ENCODE measurements at regions of chr4 and their contacts with region 1.

Region 1: GRCh38 chr4:87375719-87376291 is 15.2 kb downstream of the HSD17B11 start:
- DNase-seq: no peak
- H3K4me3 Mint-ChIP-seq: no peak overlapping the region
- H3K27ac Mint-ChIP-seq: no peak overlapping the region
- H3K4me1 Mint-ChIP-seq: no peaks in the 10 kb centered on the region
- H3K27me3 Mint-ChIP-seq: no peaks in the 10 kb centered on the region

Region 2: DNA sequence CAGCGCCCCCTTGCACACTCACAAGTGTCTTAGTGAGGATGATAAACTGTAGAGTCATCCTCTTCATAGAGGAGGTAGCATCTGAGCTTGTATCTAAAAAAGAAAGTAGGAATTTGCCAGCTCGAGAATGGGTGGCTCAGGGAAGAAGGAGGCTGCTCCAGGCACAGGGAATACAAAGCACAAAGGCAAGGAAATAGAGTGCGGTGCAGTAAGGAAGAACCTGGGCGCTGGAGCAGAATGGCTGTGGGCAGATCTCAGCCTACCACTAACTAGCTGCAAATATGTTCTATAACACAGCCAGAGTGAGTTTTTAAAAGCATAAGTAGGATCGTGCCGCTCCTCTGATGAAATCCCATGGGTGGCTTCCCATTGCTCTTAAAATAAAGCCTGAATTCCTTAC is 954.3 kb before region 1 on chr4:
- CTCF ChIA-PET with region 1: no interaction called
- DNase-seq: no peak
- H3K4me3 Mint-ChIP-seq: no peak overlapping the region
- H3K27ac Mint-ChIP-seq: no peak overlapping the region
- H3K4me1 Mint-ChIP-seq: no peaks in the 10 kb centered on the region
- H3K27me3 Mint-ChIP-seq: no peaks in the 10 kb centered on the region

Region 3: DNA sequence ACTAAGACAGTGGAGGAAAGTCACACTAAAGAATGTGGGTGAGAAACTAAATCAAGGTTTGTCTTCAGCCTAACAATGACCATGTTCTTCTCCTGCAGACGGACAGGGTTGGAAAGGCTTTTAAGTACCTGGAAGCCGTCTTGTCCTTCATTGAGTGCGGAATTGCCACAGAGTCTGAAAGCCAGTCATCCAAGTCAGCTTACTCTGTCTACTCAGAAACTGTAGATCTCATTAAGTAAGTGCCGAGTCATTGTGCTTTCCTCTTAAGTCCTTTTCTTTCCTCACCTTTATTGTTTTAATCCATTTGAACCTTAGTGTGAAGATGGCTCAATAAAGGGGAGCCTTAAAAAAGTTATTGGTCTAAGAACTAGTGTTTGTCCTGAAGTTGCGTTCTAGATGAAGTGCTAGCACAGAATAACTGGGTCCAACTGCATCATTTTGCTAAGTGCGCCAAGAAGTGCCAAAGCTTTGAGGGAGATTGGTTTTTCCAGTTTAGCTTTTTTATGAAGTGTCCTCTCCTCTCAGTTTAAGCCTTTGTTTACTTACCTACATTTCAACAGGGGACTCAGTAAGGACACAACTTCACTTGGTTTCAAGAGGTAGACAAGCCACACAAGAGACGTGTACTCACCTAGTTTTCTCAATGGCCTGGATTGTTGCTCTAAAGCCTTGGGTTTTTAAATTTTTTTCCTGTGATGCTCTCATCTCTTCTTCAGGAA is 244.7 kb before region 1 on chr4:
- CTCF ChIA-PET with region 1: no interaction called
- DNase-seq: no peak
- H3K4me3 Mint-ChIP-seq: no peak overlapping the region
- H3K27ac Mint-ChIP-seq: no peak overlapping the region
- H3K4me1 Mint-ChIP-seq: no peaks in the 10 kb centered on the region
- H3K27me3 Mint-ChIP-seq: no peaks in the 10 kb centered on the region

Region 4: GRCh38 chr4:87363567-87363966 is 12.2 kb before region 1 on chr4:
- CTCF ChIA-PET with region 1: interaction called, 13 read pairs
- DNase-seq: no peak
- H3K4me3 Mint-ChIP-seq: no peak overlapping the region
- H3K27ac Mint-ChIP-seq: no peak overlapping the region
- H3K4me1 Mint-ChIP-seq: no peaks in the 10 kb centered on the region
- H3K27me3 Mint-ChIP-seq: no peaks in the 10 kb centered on the region

Region 5: DNA sequence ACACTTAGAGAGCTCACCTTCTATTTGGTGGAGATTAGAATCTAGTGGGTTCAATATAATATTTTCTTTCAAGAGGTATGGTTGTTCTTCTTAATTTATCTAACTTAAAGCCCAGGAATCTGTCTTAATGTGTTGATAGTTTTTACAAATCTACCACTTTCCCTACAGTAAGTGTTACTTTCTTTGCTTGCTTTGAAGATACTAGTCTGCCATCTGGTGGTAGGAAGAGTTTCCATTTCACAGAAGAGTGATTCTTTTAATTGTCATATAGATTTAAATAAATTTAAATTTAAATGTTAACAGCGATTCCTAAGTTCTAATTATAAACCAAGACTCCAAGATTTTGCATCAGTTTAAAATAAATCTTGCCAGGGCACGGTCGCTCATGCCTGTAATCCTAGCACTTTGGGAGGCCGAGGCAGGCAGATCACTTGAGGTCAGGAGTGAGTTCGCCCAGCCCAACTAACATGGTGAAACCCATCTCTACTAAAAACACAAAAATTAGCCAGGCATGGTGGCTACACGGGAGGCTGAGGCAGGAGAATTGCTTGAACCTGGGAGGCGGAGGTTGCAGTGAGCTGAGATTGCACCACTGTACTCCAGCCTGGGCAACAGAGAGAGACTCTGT is 90.0 kb after region 1 on chr4:
- CTCF ChIA-PET with region 1: interaction called, 47 read pairs
- DNase-seq: no peak
- H3K4me3 Mint-ChIP-seq: no peak overlapping the region
- H3K27ac Mint-ChIP-seq: no peak overlapping the region
- H3K4me1 Mint-ChIP-seq: no peaks in the 10 kb centered on the region
- H3K27me3 Mint-ChIP-seq: no peaks in the 10 kb centered on the region

Region 6: GRCh38 chr4:87732033-87732765 is 356.4 kb after region 1 on chr4:
- CTCF ChIA-PET with region 1: no interaction called
- DNase-seq: no peak
- H3K4me3 Mint-ChIP-seq: no peak overlapping the region
- H3K27ac Mint-ChIP-seq: no peak overlapping the region
- H3K4me1 Mint-ChIP-seq: no peaks in the 10 kb centered on the region
- H3K27me3 Mint-ChIP-seq: no peaks in the 10 kb centered on the region